ENCODE measurements at regions of chr17 and their contacts with region 1.

Region 1: GRCh38 chr17:81871387-81872230 is 472 bp upstream of the ARHGDIA start:
- H3K4me3 ChIP-seq: peak overlapping the region; percentile 85
- H3K27ac ChIP-seq: peak overlapping the region; percentile 100
- H3K4me1 ChIP-seq: peaks cover 17% of the 10 kb centered on the region; the same call in 1 of the 2 replicates
- CTCF ChIP-seq: peak; percentile 95

Region 2: GRCh38 chr17:81733507-81734404 is 137.9 kb before region 1 on chr17:
- CTCF ChIA-PET with region 1: interaction called, 5 read pairs
- POLR2A ChIA-PET with region 1: interaction called, 14 read pairs
- H3K4me3 ChIP-seq: no peak overlapping the region
- H3K27ac ChIP-seq: no peak overlapping the region
- H3K4me1 ChIP-seq: no peaks in the 10 kb centered on the region
- CTCF ChIP-seq: peak; percentile 97

Region 3: GRCh38 chr17:81808778-81809555 is 62.6 kb before region 1 on chr17:
- CTCF ChIA-PET with region 1: no interaction called
- POLR2A ChIA-PET with region 1: no interaction called
- H3K4me3 ChIP-seq: no peak overlapping the region
- H3K27ac ChIP-seq: no peak overlapping the region
- H3K4me1 ChIP-seq: peaks cover 2% of the 10 kb centered on the region; the same call in 1 of the 2 replicates
- CTCF ChIP-seq: no peak

Region 4: GRCh38 chr17:81833160-81833920 is 38.3 kb before region 1 on chr17 and contains the start of gene MCRIP1:
- CTCF ChIA-PET with region 1: no interaction called
- POLR2A ChIA-PET with region 1: interaction called, 10 read pairs
- H3K4me3 ChIP-seq: peak within 1 kb of the TSS; percentile 77
- H3K27ac ChIP-seq: peak within 1 kb of the TSS; percentile 95
- H3K4me1 ChIP-seq: no peaks in the 10 kb centered on the region
- CTCF ChIP-seq: no peak

Region 5: GRCh38 chr17:81860756-81861518 is 10.7 kb before region 1 on chr17:
- CTCF ChIA-PET with region 1: interaction called, 4 read pairs
- POLR2A ChIA-PET with region 1: interaction called, 17 read pairs
- H3K4me3 ChIP-seq: peak overlapping the region; percentile 92
- H3K27ac ChIP-seq: peak overlapping the region; percentile 90
- H3K4me1 ChIP-seq: peaks cover 7% of the 10 kb centered on the region
- CTCF ChIP-seq: no peak

Region 6: DNA sequence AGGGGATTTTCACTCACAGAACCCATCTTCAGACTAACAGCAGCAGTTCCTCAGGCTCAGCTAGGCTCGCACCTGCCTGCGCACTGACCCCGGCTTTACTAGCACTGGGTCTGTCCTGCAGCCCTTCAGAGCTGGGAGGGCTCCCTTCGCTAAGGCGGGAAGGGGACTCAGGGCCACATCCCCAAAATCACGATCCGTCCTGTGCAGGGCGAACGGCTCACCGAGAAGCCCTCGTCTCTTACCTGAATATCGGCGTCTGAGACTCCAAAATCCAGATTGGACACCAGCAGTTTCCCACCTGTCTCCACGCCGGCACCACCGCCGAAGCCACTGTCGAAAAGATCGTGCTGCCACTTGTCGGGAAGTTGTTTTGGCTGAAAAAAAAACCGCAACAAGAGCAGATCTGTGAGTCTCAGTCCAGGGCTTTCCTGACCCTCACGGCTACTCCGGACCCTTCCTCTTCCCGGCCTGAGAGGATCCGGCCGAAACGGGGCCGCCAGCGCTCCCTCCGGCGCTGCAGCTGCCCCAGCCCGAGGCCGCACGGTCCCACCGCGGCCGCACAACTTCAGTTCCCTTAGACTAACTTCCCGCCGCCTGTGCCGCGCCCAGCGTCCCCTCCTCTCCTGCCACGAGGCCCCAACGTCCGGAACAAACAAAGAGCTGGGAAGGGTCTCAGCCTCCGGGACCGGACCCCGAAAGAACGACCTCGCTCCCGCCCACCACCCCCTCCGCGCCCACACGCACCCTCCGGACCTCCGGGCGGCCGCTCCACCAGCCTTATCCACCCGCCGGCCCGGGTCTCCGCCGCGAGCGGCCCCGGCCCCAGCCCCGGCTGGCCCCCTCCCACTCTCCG is 19.1 kb after region 1 on chr17:
- CTCF ChIA-PET with region 1: interaction called, 4 read pairs
- POLR2A ChIA-PET with region 1: interaction called, 17 read pairs
- H3K4me3 ChIP-seq: peak overlapping the region; percentile 92
- H3K27ac ChIP-seq: peak overlapping the region; percentile 96
- H3K4me1 ChIP-seq: peaks cover 5% of the 10 kb centered on the region; the same call in 1 of the 2 replicates
- CTCF ChIP-seq: no peak

Region 7: GRCh38 chr17:81990836-81991683 is 119.5 kb after region 1 on chr17:
- CTCF ChIA-PET with region 1: no interaction called
- POLR2A ChIA-PET with region 1: no interaction called
- H3K4me3 ChIP-seq: no peak overlapping the region
- H3K27ac ChIP-seq: no peak overlapping the region
- H3K4me1 ChIP-seq: peaks cover 7% of the 10 kb centered on the region
- CTCF ChIP-seq: no peak

Region 8: GRCh38 chr17:82003411-82004381 is 132.1 kb after region 1 on chr17:
- CTCF ChIA-PET with region 1: no interaction called
- POLR2A ChIA-PET with region 1: no interaction called
- H3K4me3 ChIP-seq: no peak overlapping the region
- H3K27ac ChIP-seq: peak overlapping the region; percentile 17; the same call in 1 of the 2 replicates
- H3K4me1 ChIP-seq: peaks cover 6% of the 10 kb centered on the region; the same call in 1 of the 2 replicates
- CTCF ChIP-seq: no peak

Measured in HEK293 (cell line).